ENCODE measurements at regions of chr1 and their contacts with region 1.

Region 1: DNA sequence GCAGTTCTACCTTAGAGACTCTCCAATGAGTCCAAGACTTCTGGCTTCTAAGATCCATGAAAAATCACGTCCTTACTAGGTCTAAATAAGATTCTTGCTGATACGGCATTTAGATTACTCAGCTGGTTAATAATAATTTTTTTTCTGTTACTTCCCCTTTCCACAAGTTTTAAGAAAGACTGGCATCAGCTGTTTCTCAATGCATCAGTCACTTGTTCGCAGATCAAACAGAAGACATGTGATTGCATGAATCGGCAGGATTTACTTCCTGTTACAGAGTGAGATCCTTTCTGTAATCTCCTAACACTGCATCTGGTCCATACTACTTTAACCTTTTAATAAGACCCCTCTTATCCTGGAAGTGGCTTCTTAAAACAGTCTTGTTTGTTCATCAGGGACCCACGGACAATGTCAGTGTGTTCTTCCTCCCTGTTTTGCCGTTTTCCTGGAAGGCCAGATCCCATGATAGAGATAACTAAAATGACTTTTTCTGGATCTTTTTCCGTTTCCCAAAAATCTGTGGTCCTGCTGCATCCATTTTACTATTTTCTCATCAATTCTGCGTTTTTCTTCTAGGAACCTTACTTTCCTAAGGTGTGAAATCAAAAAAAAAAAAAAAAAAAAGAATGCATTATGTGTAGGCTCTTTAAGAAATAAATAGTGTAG is 6.1 kb downstream of the NPL start:
- DNase-seq: no peak
- ATAC-seq: no peak
- H3K4me3 ChIP-seq: no peak overlapping the region
- H3K27ac ChIP-seq: no peak overlapping the region
- H3K4me1 ChIP-seq: no peaks in the 10 kb centered on the region
- H3K27me3 ChIP-seq: peaks cover 6% of the 10 kb centered on the region
- CTCF ChIP-seq: no peak

Region 2: GRCh38 chr1:182588500-182589452 is 206.9 kb before region 1 on chr1 and contains the start of gene RNASEL:
- CTCF ChIA-PET with region 1: interaction called, 13 read pairs
- POLR2A ChIA-PET with region 1: no interaction called
- in situ Hi-C with region 1: no loop called
- intact Hi-C with region 1: no loop called
- DNase-seq: no peak
- ATAC-seq: peak; percentile 98
- H3K4me3 ChIP-seq: peak within 1 kb of the TSS; percentile 51 to 93
- H3K27ac ChIP-seq: peak within 1 kb of the TSS; percentile 62
- H3K4me1 ChIP-seq: peaks cover 2% of the 10 kb centered on the region; the same call in 1 of the 2 replicates
- H3K27me3 ChIP-seq: no peaks in the 10 kb centered on the region
- CTCF ChIP-seq: no peak
- total RNA-seq, gene RNASEL: 1.2 TPM

Region 3: GRCh38 chr1:183195142-183195574 is 399.5 kb after region 1 on chr1:
- CTCF ChIA-PET with region 1: no interaction called
- POLR2A ChIA-PET with region 1: no interaction called
- in situ Hi-C with region 1: no loop called
- intact Hi-C with region 1: no loop called
- DNase-seq: no peak
- ATAC-seq: peak; percentile 60; the same call in 1 of the 2 replicates
- H3K4me3 ChIP-seq: no peak overlapping the region
- H3K27ac ChIP-seq: no peak overlapping the region
- H3K4me1 ChIP-seq: no peaks in the 10 kb centered on the region
- H3K27me3 ChIP-seq: no peaks in the 10 kb centered on the region
- CTCF ChIP-seq: no peak